GM12878 (cell line): ENCODE measurements at regions of chr19 and their contacts with region 1.

Region 1: DNA sequence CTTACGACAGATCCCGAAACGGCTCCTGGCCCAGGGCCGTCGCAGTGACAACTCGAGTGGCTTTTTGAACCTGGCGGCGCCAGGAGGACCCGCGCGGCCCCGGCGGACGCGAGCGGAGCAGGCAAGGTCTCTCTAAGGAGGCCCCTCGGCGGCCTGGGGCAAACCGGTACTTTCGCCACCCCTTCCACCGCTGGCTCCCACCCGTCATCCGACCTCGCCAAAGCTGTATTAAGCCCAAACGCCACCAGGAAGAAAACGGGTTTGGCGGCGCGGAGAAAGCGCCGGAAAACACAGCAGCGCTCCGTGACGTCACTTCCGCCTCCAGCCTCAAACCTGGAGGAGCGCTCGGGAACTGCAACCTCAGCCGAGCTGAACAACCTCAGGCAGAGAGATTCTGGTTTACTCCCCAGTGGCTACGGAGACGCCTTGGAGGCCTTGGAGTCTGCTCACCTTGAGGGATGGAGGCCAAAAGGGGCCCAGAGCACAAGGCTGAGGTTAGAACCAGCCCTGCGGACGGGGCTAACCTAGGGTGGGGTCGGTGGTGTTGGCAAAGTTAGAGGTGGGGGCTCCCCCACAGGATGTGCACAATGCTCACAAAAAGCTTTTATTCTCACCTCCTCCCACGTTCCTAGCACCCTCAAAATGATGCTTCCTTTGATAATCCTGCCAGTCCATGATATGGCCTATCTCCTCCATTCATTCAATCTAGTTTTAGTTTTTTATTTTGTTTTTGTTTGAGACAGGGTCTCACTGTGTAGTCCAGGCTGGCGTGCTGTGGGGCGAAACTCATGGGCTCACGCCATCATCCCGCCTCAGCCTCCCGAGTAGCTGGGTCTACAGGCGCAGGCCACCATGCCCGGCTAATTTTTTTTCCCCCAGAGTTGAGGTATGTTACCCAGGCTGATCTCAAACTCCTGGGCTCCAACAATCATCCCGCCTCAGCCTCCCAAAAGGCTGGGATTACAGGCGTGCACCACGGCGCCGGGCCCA is at the start of gene ZNF266:
- DNase-seq: peak; percentile 63
- ATAC-seq: peak; percentile 97
- H3K4me3 ChIP-seq: peak within 1 kb of the TSS; percentile 82
- H3K27ac ChIP-seq: peak within 1 kb of the TSS; percentile 88
- H3K4me1 ChIP-seq: no peaks in the 10 kb centered on the region
- H3K27me3 ChIP-seq: no peaks in the 10 kb centered on the region
- CTCF ChIP-seq: peak; percentile 37 to 78 (median 66); a peak in 5 of 6 replicates
- EP300 ChIP-seq: no peak
- POLR2A ChIP-seq: peak; percentile 89
- RAD21 ChIP-seq: no peak
- polyA plus RNA-seq, gene ZNF266: 7.7 to 11.8 TPM

Region 2: GRCh38 chr19:9309139-9309973 is 126.2 kb before region 1 on chr19 and contains the start of gene ZNF699:
- CTCF ChIA-PET with region 1: interaction called, 6 read pairs
- POLR2A ChIA-PET with region 1: interaction called, 4 read pairs
- RAD21 ChIA-PET with region 1: no interaction called
- SMC1A ChIA-PET with region 1: no interaction called
- in situ Hi-C with region 1: no loop called
- intact Hi-C with region 1: loop called (anchors 10 kb)
- DNase-seq: peak; percentile 91
- ATAC-seq: peak; percentile 96
- H3K4me3 ChIP-seq: peak within 1 kb of the TSS; percentile 77
- H3K27ac ChIP-seq: peak within 1 kb of the TSS; percentile 88
- H3K4me1 ChIP-seq: no peaks in the 10 kb centered on the region
- H3K27me3 ChIP-seq: no peaks in the 10 kb centered on the region
- CTCF ChIP-seq: no peak
- EP300 ChIP-seq: no peak
- POLR2A ChIP-seq: peak; percentile 87
- RAD21 ChIP-seq: no peak
- polyA plus RNA-seq, gene ZNF699: 0.04 to 0.31 TPM

Region 3: GRCh38 chr19:9370738-9371619 is 64.6 kb before region 1 on chr19:
- CTCF ChIA-PET with region 1: no interaction called
- POLR2A ChIA-PET with region 1: no interaction called
- RAD21 ChIA-PET with region 1: no interaction called
- SMC1A ChIA-PET with region 1: no interaction called
- in situ Hi-C with region 1: no loop called
- intact Hi-C with region 1: no loop called
- DNase-seq: no peak
- ATAC-seq: no peak
- H3K4me3 ChIP-seq: no peak overlapping the region
- H3K27ac ChIP-seq: no peak overlapping the region
- H3K4me1 ChIP-seq: no peaks in the 10 kb centered on the region
- H3K27me3 ChIP-seq: no peaks in the 10 kb centered on the region
- CTCF ChIP-seq: no peak
- EP300 ChIP-seq: no peak
- POLR2A ChIP-seq: no peak
- RAD21 ChIP-seq: no peak